ENCODE measurements at regions of chr13 and their contacts with region 1.

Region 1: DNA sequence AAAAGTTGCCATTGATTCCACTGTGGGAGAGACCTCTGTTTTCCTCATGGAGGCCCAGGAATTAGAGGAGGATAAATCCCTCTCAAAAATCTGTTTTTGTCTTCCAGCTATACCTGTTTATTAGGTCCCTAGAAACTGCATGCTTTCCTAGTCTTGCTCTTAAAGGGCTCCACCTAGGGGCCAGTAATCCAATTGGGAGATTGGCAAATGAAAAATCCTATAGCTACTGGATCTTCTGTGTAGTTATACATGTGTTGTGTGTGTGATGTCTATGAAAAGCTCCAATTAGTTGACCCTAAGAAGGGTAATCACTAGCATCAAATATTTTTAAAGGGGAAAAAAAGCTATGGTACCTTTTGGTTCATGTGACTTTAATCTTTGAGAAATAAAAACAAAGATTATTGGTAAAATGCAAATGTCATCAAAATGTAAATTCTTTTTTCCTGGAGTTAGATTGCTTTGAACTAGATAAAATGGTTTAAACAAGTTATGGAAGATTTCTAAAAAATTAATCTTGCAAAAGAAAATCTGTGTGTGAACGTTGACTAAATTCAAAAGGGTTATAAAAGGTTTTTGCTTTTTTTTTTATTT is 63.4 kb upstream of the C1QTNF9B start:
- DNase-seq: no peak
- H3K4me3 ChIP-seq: no peak overlapping the region
- CTCF ChIP-seq: peak; percentile 57

Region 2: DNA sequence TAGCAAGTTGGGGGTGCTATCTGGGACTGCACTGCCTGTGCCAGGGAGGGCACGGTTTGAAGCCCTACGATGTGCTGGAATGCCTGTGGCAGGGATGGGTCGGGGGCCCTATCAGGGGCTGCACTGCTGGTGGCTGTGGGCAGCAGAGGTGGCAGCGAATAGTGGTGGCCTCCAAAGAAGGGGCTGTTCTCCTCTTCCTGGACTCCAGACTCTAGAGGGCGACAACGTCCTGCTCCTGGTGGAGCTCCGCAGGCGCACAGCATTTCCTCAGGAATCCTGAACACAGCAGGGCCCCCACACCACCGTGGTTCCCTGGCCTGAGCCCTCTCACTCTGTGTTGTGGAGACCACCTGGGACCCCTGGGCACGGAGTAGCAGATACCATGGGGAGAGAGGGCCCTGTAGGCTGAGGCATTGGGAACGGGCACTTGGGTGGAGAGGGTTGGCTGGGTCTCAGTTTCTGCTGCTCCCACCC is 244.9 kb before region 1 on chr13:
- CTCF ChIA-PET with region 1: no interaction called
- POLR2A ChIA-PET with region 1: no interaction called
- DNase-seq: no peak
- H3K4me3 ChIP-seq: no peak overlapping the region
- CTCF ChIP-seq: peak; percentile 20

Region 3: GRCh38 chr13:23888658-23889614 is 71.7 kb before region 1 on chr13 and contains the start of gene MIPEP:
- CTCF ChIA-PET with region 1: interaction called, 16 read pairs
- POLR2A ChIA-PET with region 1: no interaction called
- DNase-seq: peak; percentile 60
- H3K4me3 ChIP-seq: peak within 1 kb of the TSS; percentile 89
- CTCF ChIP-seq: peak; percentile 95

Region 4: GRCh38 chr13:23921451-23921888 is 39.2 kb before region 1 on chr13:
- CTCF ChIA-PET with region 1: interaction called, 152 read pairs
- POLR2A ChIA-PET with region 1: no interaction called
- DNase-seq: no peak
- H3K4me3 ChIP-seq: no peak overlapping the region
- CTCF ChIP-seq: peak; percentile 37

Region 5: GRCh38 chr13:23934520-23934919 is 26.1 kb before region 1 on chr13:
- CTCF ChIA-PET with region 1: interaction called, 35 read pairs
- POLR2A ChIA-PET with region 1: no interaction called
- DNase-seq: no peak
- H3K4me3 ChIP-seq: no peak overlapping the region
- CTCF ChIP-seq: no peak

Region 6: GRCh38 chr13:23980160-23980551 is 19.5 kb after region 1 on chr13:
- CTCF ChIA-PET with region 1: interaction called, 18 read pairs
- POLR2A ChIA-PET with region 1: no interaction called
- DNase-seq: no peak
- H3K4me3 ChIP-seq: peak overlapping the region; percentile 86
- CTCF ChIP-seq: no peak

Region 7: DNA sequence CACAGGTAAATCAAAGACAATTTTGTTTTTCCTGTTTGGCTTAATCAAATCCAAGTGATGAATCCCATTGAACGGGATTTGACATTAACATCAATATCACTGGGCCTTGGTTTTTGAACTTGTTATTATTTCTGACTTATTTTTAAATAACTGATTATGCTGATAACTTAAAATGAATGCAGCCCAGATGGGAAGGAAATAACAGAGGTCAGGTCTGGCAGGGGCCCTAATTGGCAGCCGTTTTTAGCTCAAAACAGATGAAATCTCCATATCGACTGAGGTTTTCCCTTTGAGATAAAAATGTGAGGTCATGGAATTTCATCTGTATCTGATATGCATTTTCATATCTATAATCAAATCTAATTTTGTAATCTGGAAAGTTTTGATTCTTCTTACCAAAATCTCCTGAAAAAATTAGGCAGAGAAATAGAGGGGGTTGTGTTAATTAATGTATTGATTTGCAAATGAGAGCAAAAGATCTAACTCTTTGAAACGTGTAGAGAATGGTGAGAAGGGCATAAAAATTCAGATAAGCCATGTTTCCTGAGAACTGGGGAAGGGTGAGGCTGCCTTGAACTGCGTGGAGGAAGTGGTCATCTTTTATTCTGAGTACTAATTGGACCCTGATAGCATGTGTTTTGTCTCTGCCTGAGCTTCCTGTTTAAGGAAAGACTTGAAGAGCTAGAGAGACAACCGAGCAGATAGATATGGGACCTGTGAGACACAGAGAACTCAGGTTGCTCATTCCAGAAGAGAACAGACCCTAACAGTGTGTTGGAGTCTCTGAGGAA is 34.8 kb after region 1 on chr13:
- CTCF ChIA-PET with region 1: interaction called, 33 read pairs
- POLR2A ChIA-PET with region 1: no interaction called
- DNase-seq: no peak
- H3K4me3 ChIP-seq: no peak overlapping the region
- CTCF ChIP-seq: no peak